Right lobe of liver (tissue), 6 donors: ENCODE measurements at regions of chr22 and their contacts with region 1.

Region 1: GRCh38 chr22:23548501-23549197 is 31.4 kb downstream of the IGLL1 start:
- DNase-seq: no peak
- ATAC-seq: no peak
- H3K4me3 ChIP-seq: no peak overlapping the region
- H3K27ac ChIP-seq: no peak overlapping the region
- H3K4me1 ChIP-seq: no peaks in the 10 kb centered on the region
- H3K27me3 ChIP-seq: no peaks in the 10 kb centered on the region
- CTCF ChIP-seq: no peak
- POLR2A ChIP-seq: no peak

Region 2: GRCh38 chr22:23591201-23591791 is 42.6 kb after region 1 on chr22:
- intact Hi-C with region 1: loop called in 1 of 2 experiments (anchors 5 kb)
- DNase-seq: peak; percentile 64 to 72 (median 67)
- ATAC-seq: peak; percentile 84 to 89 (median 86)
- H3K4me3 ChIP-seq: no peak overlapping the region
- H3K27ac ChIP-seq: no peak overlapping the region
- H3K4me1 ChIP-seq: no peaks in the 10 kb centered on the region
- H3K27me3 ChIP-seq: no peaks in the 10 kb centered on the region
- CTCF ChIP-seq: peak; percentile 69 to 88 (median 86)
- POLR2A ChIP-seq: no peak